ENCODE measurements at regions of chr3 and their contacts with region 1.

Region 1: GRCh38 chr3:154252759-154253638 is 71.3 kb downstream of the DHX36 start:
- DNase-seq: peak; percentile 87
- ATAC-seq: peak; percentile 88
- H3K4me3 Mint-ChIP-seq: no peak overlapping the region
- H3K27ac Mint-ChIP-seq: peak overlapping the region; percentile 2
- H3K4me1 Mint-ChIP-seq: no peaks in the 10 kb centered on the region
- H3K27me3 Mint-ChIP-seq: no peaks in the 10 kb centered on the region
- CTCF ChIP-seq: peak; percentile 76

Region 2: DNA sequence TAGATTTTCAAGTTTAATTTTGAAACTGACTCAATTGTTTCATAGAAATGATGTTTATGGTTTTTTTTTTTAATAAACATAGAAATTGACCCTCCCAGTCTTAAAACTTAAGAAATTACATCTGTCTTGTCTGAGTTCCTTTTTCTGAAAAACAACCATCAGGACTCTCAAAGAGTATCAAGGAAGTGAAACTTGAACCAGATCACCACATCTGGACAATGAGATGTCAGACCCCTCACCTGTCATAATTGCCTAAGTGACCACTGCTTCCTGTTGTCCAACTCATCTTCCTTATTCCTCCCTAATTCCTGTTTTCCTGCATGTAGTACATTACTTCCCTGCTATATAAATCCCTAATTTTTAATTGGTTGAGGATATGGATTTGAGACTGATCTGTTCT is 573.3 kb before region 1 on chr3:
- CTCF ChIA-PET with region 1: no interaction called
- POLR2A ChIA-PET with region 1: no interaction called
- intact Hi-C with region 1: no loop called
- DNase-seq: no peak
- ATAC-seq: no peak
- H3K4me3 Mint-ChIP-seq: no peak overlapping the region
- H3K27ac Mint-ChIP-seq: no peak overlapping the region
- H3K4me1 Mint-ChIP-seq: peaks cover 11% of the 10 kb centered on the region
- H3K27me3 Mint-ChIP-seq: no peaks in the 10 kb centered on the region
- CTCF ChIP-seq: no peak

Region 3: DNA sequence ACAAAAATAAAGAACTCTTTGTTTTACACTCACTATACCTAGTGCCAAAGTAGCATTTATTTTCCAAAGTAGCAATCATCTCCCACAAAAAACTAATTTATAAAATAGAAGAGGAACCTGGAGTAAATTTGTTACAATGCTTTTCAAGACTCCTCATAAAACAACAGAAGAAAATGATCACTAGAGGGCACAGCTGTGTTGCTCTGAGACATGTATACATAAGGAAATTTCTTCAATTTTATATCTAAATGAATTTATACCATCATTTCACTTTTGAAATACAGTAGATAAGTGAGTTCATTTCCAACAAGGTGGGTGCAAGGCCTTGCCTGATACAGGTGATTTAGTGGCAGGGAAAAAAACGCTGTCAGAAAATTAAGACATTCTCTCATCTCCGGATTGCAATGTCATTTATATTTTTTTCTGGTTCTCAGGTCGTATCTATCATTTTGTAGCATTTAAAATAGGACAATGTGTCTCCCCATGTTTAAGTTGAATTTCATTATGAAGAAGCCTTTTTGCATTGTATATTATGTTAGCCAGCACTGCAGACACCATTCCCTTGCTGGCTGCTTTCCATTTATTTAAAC is 157.1 kb before region 1 on chr3:
- CTCF ChIA-PET with region 1: interaction called, 4 read pairs
- POLR2A ChIA-PET with region 1: no interaction called
- intact Hi-C with region 1: loop called (anchors 5 kb)
- DNase-seq: no peak
- ATAC-seq: no peak
- H3K4me3 Mint-ChIP-seq: no peak overlapping the region
- H3K27ac Mint-ChIP-seq: no peak overlapping the region
- H3K4me1 Mint-ChIP-seq: no peaks in the 10 kb centered on the region
- H3K27me3 Mint-ChIP-seq: peaks cover 2% of the 10 kb centered on the region
- CTCF ChIP-seq: no peak